ENCODE measurements at regions of chr4 and their contacts with region 1.

Region 1: GRCh38 chr4:41177016-41177415 is 37.3 kb downstream of the APBB2 start:
- DNase-seq: peak; percentile 61
- ATAC-seq: peak; percentile 60
- H3K4me3 ChIP-seq: no peak overlapping the region
- H3K27ac ChIP-seq: no peak overlapping the region
- H3K4me1 ChIP-seq: peaks cover 43% of the 10 kb centered on the region
- H3K27me3 ChIP-seq: no peaks in the 10 kb centered on the region
- CTCF ChIP-seq: 0 out of 2 replicates have a peak, but pooled peaks have one; percentile 18

Region 2: DNA sequence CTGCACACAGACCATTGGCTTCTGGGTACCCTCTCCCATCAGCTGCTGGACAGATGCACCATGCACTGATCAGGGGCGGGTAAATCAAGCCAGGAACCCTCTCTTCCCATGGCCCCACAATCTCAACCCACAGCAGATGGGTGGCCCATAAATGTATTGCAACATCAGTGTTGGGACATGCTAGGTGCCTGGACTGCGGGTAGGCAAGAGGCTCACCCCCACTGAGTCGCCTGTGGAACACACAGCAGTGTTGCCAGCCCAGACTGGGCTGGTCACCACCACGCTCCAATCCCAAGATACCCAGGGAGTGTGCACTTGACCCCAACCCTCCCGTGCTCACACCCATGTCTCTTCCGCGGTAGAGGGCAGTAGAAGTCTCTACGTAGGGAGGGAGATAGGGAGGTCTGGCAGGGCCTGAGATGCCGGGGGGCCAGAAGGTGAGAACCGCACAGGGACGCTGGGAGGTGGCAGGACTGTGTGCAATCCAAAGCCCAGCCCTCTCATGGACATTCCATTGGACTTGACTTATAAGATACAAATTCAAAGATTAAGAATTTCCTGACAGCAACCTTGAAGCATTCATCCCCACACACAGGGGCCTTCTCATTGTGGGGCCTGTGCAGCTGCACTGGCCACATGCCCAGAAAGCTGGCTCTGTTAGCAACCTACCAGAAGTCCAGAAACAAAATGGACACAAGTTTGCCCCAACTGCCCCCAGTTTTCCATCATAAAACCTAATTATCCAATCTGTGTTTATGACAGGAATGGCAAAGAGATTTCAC is 243.6 kb before region 1 on chr4:
- CTCF ChIA-PET with region 1: no interaction called
- POLR2A ChIA-PET with region 1: no interaction called
- intact Hi-C with region 1: no loop called
- DNase-seq: no peak
- ATAC-seq: no peak
- H3K4me3 ChIP-seq: no peak overlapping the region
- H3K27ac ChIP-seq: no peak overlapping the region
- H3K4me1 ChIP-seq: no peaks in the 10 kb centered on the region
- H3K27me3 ChIP-seq: no peaks in the 10 kb centered on the region
- CTCF ChIP-seq: no peak

Region 3: DNA sequence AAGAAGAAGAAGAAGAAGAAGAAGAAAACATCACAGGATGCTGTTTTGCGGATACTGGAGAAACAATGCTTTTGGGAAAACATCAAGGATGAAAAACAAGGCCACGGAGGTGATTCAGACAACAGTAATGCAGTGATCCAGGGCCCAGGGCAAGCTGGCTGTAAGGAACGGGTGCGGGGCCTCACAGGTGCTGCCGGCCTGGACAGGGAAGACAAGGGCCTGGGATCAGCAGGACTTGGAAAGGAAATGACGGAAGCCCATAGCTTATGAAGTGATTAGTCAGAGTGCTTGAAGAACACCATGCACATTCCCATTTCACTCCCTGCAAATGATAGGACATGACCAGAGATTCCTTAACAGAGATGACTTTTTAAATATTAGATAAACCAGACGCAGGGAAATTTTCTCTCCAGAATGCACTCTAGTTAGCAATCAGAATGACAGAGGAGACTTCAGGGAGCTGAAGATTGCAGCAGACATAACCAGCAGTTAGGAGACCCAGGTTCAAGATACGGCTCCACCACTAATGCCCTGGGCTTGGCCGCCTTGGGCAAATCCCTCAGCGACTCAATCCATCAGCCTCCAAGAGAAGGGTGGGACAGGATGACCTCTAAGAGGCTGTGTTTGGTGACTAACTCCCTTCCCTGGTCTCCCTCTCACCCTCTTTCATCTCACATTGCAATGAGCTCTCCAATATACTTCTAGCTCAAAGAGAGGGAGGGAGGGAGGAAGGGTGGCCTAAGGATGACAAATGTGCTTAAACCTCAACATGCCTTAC is 16.8 kb before region 1 on chr4:
- CTCF ChIA-PET with region 1: no interaction called
- POLR2A ChIA-PET with region 1: no interaction called
- intact Hi-C with region 1: loop called (anchors 1 kb)
- DNase-seq: peak; percentile 89
- ATAC-seq: peak; percentile 98
- H3K4me3 ChIP-seq: peak overlapping the region; percentile 22; the same call in 1 of the 2 replicates
- H3K27ac ChIP-seq: peak overlapping the region; percentile 97
- H3K4me1 ChIP-seq: peaks cover 48% of the 10 kb centered on the region
- H3K27me3 ChIP-seq: no peaks in the 10 kb centered on the region
- CTCF ChIP-seq: no peak

Region 4: GRCh38 chr4:41221850-41222645 is 45.0 kb after region 1 on chr4:
- CTCF ChIA-PET with region 1: no interaction called
- POLR2A ChIA-PET with region 1: no interaction called
- intact Hi-C with region 1: no loop called
- DNase-seq: peak; percentile 54
- ATAC-seq: peak; percentile 37; the same call in 1 of the 2 replicates
- H3K4me3 ChIP-seq: no peak overlapping the region
- H3K27ac ChIP-seq: no peak overlapping the region
- H3K4me1 ChIP-seq: peaks cover 14% of the 10 kb centered on the region
- H3K27me3 ChIP-seq: no peaks in the 10 kb centered on the region
- CTCF ChIP-seq: no peak

Measured in PC-3 (cell line).